H1 (cell line): ENCODE measurements at regions of chr18 and their contacts with region 1.

Region 1: GRCh38 chr18:47545613-47546012 is 294.2 kb upstream of the SKOR2 start:
- DNase-seq: peak in 1 of 2 experiments; percentile 38
- H3K4me3 ChIP-seq: no peak overlapping the region
- H3K27ac ChIP-seq: no peak overlapping the region
- H3K4me1 ChIP-seq: no peaks in the 10 kb centered on the region
- H3K27me3 ChIP-seq: no peaks in the 10 kb centered on the region; a peak in 1 of 7 replicates
- CTCF ChIP-seq: peak; percentile 67 to 83 (median 72)
- EP300 ChIP-seq: no peak
- POLR2A ChIP-seq: no peak
- RAD21 ChIP-seq: peak; percentile 62 to 74

Region 2: DNA sequence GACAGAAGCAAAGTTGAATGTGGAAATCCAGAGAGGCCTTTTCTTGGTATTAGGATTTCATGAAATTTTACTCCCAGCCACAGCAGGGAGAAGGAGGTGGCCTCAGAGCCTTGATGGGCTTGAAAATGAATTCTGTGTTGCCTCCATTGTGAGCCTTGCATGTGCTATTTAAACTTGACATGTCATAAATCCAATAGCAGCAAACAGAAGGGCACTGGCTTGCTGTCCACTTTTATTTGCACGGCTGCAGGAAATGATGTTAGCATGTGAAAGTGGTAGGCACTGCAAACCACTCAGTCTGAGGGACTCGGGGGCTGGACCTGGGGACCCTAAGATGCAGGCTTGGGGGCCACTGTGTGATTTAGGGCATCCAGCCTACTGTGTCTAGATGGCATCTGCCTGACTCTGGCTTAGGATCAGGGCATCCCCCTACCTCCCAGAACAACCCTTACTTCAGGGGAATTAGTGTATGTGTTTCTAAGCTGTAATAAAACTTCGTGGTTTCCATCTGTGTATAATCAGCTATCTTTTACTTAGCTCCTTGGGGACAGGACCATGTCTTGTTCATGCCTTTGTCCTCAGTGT is 155.1 kb before region 1 on chr18:
- CTCF ChIA-PET with region 1: no interaction called
- POLR2A ChIA-PET with region 1: no interaction called
- DNase-seq: no peak
- H3K4me3 ChIP-seq: no peak overlapping the region
- H3K27ac ChIP-seq: no peak overlapping the region
- H3K4me1 ChIP-seq: no peaks in the 10 kb centered on the region
- H3K27me3 ChIP-seq: no peaks in the 10 kb centered on the region; a peak in 1 of 7 replicates
- CTCF ChIP-seq: no peak
- EP300 ChIP-seq: no peak
- POLR2A ChIP-seq: no peak
- RAD21 ChIP-seq: no peak

Region 3: GRCh38 chr18:47531717-47532116 is 13.9 kb before region 1 on chr18:
- CTCF ChIA-PET with region 1: interaction called, 11 read pairs
- POLR2A ChIA-PET with region 1: no interaction called
- DNase-seq: peak in 1 of 2 experiments; percentile 61
- H3K4me3 ChIP-seq: no peak overlapping the region
- H3K27ac ChIP-seq: no peak overlapping the region
- H3K4me1 ChIP-seq: no peaks in the 10 kb centered on the region
- H3K27me3 ChIP-seq: no peaks in the 10 kb centered on the region
- CTCF ChIP-seq: peak; percentile 40 to 58 (median 49)
- EP300 ChIP-seq: no peak
- POLR2A ChIP-seq: no peak
- RAD21 ChIP-seq: peak; percentile 24 to 59; a peak in 3 of 4 replicates

Region 4: DNA sequence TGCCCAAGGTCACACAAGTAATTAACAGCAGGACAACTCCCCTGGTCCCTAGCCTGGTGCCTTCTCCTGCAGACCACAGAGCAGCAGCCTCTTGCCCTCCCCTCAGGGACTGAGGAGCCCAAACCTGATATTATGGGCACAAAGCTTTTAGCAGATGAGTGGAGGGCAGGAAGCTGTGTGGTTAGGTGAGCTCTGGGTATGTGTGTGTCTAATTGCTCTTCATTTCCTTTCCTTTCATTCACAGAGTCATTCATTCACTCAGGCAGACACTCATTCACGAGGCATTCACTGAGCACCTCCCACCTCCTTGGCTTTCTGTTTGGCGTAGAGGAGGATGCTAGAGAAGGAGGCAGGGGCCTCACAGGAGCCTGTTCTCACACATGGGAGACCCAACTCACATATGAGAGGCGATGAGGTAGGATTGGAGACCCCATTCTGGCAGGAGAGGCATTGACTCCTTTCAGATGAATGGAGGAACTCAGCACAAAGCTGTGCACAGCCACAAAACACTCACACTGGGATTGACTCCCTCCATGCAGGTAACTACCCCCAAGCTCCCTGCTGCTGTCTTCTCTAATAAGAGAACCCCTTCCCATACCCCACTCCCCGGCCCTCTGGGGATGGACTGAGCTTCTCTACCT is 12.6 kb after region 1 on chr18:
- CTCF ChIA-PET with region 1: interaction called, 51 read pairs
- POLR2A ChIA-PET with region 1: no interaction called
- DNase-seq: peak in 1 of 2 experiments; percentile 42
- H3K4me3 ChIP-seq: no peak overlapping the region
- H3K27ac ChIP-seq: no peak overlapping the region
- H3K4me1 ChIP-seq: peaks cover 10 to 23% (median 20%) of the 10 kb centered on the region in 4 experiments
- H3K27me3 ChIP-seq: no peaks in the 10 kb centered on the region; a peak in 2 of 7 replicates
- CTCF ChIP-seq: no peak
- EP300 ChIP-seq: no peak
- POLR2A ChIP-seq: no peak
- RAD21 ChIP-seq: no peak